GM12878 (cell line): ENCODE measurements at regions of chr1 and their contacts with region 1.

Region 1: DNA sequence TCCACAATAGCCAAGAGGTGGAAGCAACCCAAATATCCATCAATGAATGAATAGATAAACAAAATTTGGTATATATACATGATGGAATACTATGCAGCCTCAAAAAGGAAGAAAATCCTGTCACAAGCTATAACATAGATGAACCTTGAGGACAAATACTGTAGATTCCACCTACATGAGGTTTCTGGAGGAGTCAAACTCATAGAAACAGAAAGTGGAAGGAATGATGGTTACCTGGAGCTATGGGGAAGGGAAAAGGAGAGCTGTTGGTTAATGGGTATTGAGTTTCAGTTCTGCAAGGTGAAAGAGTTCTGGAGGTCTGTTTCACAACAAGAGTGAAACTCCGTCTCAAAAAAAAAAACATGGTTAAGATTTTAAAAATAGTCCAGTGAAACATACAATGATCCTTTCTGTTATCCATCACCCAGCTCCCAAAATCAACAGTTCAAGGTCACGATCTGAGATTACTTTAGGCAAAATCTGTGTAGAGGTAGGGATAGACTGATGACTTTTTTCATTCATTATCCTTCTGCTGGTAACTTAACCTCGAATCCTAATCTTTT is 80.8 kb upstream of the HNRNPU start:
- DNase-seq: peak; percentile 85
- ATAC-seq: peak; percentile 74
- H3K4me3 ChIP-seq: peak overlapping the region; percentile 33
- H3K27ac ChIP-seq: peak overlapping the region; percentile 88
- H3K4me1 ChIP-seq: peaks cover 25% of the 10 kb centered on the region
- H3K27me3 ChIP-seq: no peaks in the 10 kb centered on the region
- CTCF ChIP-seq: no peak
- EP300 ChIP-seq: peak; percentile 54 to 73; a peak in 3 of 4 replicates
- POLR2A ChIP-seq: no peak
- RAD21 ChIP-seq: no peak

Region 2: GRCh38 chr1:244652699-244653466 is 292.3 kb before region 1 on chr1 and contains the start of gene DESI2:
- CTCF ChIA-PET with region 1: no interaction called
- POLR2A ChIA-PET with region 1: no interaction called
- RAD21 ChIA-PET with region 1: no interaction called
- SMC1A ChIA-PET with region 1: no interaction called
- in situ Hi-C with region 1: no loop called
- intact Hi-C with region 1: loop called (anchors 10 kb)
- DNase-seq: peak; percentile 96
- ATAC-seq: peak; percentile 95
- H3K4me3 ChIP-seq: peak within 1 kb of the TSS; percentile 91
- H3K27ac ChIP-seq: peak within 1 kb of the TSS; percentile 71
- H3K4me1 ChIP-seq: no peaks in the 10 kb centered on the region
- H3K27me3 ChIP-seq: no peaks in the 10 kb centered on the region; a peak in 1 of 4 replicates
- CTCF ChIP-seq: peak; percentile 40 to 51 (median 46); a peak in 5 of 6 replicates
- EP300 ChIP-seq: 0 out of 4 replicates have a peak, but pooled peaks of 1 of the 2 experiments have one; percentile 2
- POLR2A ChIP-seq: peak; percentile 96
- RAD21 ChIP-seq: no peak
- polyA plus RNA-seq, gene DESI2: 6.2 to 7.0 TPM

Region 3: DNA sequence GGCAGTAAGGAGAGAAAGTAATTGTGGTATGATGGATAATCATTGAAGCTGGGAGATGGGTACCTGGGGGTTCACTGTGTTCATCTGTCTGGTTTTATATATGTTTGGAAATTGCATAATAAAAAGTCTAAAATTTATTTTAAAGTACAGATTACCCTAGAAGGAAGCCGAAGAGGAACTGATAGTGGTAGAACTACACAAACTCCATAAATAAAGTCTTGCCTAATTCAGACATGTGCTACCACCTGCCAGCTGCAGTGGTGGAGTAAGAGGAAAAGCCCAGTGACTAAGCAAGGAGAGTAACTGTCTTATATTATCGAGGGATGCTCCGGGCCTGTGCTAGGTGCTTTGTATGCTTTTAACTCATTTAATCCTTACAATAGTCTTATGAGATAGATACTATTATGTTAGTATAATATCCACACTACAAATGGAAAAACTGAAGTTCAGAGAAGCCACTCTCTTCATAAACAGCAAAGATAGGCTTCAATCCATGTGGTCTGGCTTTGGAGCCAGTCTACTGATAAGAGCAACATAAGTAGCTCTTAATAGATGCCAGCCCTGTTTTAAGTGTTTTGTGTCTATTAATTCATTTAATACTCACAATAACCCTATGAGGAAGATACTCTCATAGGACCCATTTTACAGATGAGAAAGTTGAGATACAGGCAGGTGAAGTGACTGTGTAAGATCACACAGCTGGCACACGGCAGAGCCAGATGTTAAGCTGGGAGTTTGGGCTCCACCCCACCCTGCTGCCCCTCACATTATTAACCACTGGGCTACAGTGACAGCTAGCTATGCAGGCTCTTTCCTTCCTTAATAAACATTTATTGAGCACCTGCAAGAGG is 24.1 kb before region 1 on chr1:
- CTCF ChIA-PET with region 1: interaction called, 5 read pairs
- POLR2A ChIA-PET with region 1: interaction called, 9 read pairs
- RAD21 ChIA-PET with region 1: interaction called, 8 read pairs
- SMC1A ChIA-PET with region 1: interaction called, 14 read pairs
- in situ Hi-C with region 1: no loop called
- intact Hi-C with region 1: loop called (anchors 2 kb)
- DNase-seq: no peak
- ATAC-seq: peak; percentile 73
- H3K4me3 ChIP-seq: no peak overlapping the region
- H3K27ac ChIP-seq: peak overlapping the region; percentile 51
- H3K4me1 ChIP-seq: peaks cover 14% of the 10 kb centered on the region
- H3K27me3 ChIP-seq: no peaks in the 10 kb centered on the region
- CTCF ChIP-seq: no peak
- EP300 ChIP-seq: no peak
- POLR2A ChIP-seq: no peak
- RAD21 ChIP-seq: no peak

Region 4: DNA sequence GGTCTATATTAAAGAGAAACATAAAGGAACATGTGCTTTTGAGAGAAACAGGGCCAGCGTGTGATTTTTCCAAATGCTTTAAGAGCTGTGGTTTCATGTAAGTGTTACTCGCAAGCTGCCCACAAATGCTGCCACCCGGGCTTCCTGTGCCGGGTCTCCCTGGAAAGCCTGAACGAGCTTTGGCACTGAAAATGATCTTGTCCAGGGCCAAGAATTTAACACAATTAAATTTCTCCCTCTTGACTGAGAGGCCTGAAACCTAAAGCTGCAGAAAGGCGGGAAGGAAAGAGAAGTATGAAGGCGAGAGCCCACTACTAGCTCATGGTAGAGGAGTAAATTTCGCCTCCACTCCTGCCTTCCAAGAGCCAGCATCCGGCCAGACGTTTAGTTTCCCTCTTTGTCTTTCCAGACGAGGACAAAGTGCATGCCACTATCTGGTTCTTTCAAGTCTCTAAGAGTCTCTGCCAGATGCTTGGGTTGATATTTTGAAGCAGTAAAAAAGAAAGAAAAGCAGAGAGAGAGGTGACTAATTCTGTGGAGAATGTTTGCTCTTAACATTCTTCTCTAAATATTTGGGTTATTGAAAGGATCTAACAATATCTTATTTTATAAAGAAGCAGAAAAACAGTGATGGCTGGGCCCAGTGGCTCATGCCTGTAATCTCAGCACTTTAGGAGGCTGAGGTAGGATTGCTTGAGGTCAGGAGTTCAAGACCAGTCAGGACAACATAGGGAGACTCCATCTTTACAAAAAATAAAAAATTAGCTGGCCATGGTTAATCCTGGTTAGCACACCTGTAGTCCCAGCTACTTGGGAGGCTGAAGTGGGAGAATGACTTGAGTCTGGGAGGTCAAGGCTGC is 19.2 kb after region 1 on chr1:
- CTCF ChIA-PET with region 1: interaction called, 7 read pairs
- POLR2A ChIA-PET with region 1: interaction called, 31 read pairs
- RAD21 ChIA-PET with region 1: interaction called, 13 read pairs
- SMC1A ChIA-PET with region 1: interaction called, 8 read pairs
- in situ Hi-C with region 1: no loop called
- intact Hi-C with region 1: no loop called
- DNase-seq: no peak
- ATAC-seq: peak; percentile 45
- H3K4me3 ChIP-seq: no peak overlapping the region
- H3K27ac ChIP-seq: no peak overlapping the region
- H3K4me1 ChIP-seq: peaks cover 7% of the 10 kb centered on the region; the same call in 1 of the 2 replicates
- H3K27me3 ChIP-seq: no peaks in the 10 kb centered on the region
- CTCF ChIP-seq: no peak
- EP300 ChIP-seq: no peak
- POLR2A ChIP-seq: no peak
- RAD21 ChIP-seq: no peak

Region 5: DNA sequence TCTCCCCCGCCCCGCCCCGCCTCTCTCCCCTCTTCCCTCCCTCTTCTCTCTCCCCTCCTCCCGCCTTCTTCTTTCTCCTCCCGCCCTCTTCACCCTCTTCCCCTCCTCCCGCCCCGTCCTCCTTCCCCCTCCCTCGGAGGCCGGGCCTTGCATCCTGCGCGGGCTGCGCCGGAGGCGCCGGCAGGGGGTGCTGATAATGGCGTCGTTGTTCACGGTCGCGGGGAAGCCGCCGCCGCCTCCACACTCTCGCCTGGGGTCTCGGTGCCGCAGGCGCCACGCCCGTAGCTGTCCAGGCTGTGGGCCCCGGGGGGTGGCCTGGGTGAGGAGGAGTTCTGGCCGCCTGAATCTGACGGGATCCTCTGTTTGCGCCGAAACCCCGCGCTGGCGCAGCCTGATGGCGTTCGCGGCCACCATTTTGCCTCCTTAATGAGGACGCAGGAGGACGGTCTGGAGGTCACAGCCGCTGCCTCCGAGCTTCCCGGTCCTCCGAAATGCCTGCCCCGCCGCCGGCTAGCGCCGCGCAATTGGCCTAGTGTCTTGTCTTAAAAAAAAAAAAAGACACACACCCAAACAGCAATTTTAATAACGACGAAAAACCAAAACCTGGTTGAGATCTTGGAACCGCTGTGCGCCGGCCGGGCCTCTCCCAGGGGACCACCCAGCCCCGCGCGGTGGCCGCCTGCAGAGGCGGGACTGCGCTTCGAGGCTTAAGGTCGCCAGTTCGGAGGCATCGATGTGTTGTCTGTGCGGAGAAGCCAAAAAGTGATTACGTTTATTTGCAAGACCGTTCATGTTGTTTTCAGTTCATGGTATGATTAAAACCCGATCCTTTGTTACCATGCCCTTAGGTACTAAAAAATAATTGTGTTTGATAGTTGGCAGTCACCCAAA is 25.7 kb after region 1 on chr1:
- CTCF ChIA-PET with region 1: interaction called, 7 read pairs
- POLR2A ChIA-PET with region 1: interaction called, 31 read pairs
- RAD21 ChIA-PET with region 1: interaction called, 11 read pairs
- SMC1A ChIA-PET with region 1: interaction called, 14 read pairs
- in situ Hi-C with region 1: no loop called
- intact Hi-C with region 1: loop called (anchors 1 kb)
- DNase-seq: peak; percentile 74
- ATAC-seq: peak; percentile 84
- H3K4me3 ChIP-seq: peak overlapping the region; percentile 58
- H3K27ac ChIP-seq: peak overlapping the region; percentile 98
- H3K4me1 ChIP-seq: no peaks in the 10 kb centered on the region
- H3K27me3 ChIP-seq: no peaks in the 10 kb centered on the region
- CTCF ChIP-seq: peak; percentile 48 to 61 (median 53)
- EP300 ChIP-seq: no peak
- POLR2A ChIP-seq: peak; percentile 90
- RAD21 ChIP-seq: peak; percentile 24; the same call in 1 of the 2 replicates